Activated CD8-positive, alpha-beta memory T cell treated with anti-CD3 and anti-CD28 coated beads, Interleukin-2, amount 10 ng/mL, durations not matched to agents 7 days and 5 days (primary cell): ENCODE measurements at regions of chr9 and their contacts with region 1.

Region 1: GRCh38 chr9:98989036-98990000 is 45.6 kb downstream of the COL15A1 start:
- DNase-seq: peak; percentile 32
- ATAC-seq: peak; percentile 47
- H3K4me3 Mint-ChIP-seq: no peak overlapping the region
- H3K27ac Mint-ChIP-seq: no peak overlapping the region
- H3K4me1 Mint-ChIP-seq: peaks cover 12% of the 10 kb centered on the region
- H3K27me3 Mint-ChIP-seq: peaks cover under 1% of the 10 kb centered on the region

Region 2: DNA sequence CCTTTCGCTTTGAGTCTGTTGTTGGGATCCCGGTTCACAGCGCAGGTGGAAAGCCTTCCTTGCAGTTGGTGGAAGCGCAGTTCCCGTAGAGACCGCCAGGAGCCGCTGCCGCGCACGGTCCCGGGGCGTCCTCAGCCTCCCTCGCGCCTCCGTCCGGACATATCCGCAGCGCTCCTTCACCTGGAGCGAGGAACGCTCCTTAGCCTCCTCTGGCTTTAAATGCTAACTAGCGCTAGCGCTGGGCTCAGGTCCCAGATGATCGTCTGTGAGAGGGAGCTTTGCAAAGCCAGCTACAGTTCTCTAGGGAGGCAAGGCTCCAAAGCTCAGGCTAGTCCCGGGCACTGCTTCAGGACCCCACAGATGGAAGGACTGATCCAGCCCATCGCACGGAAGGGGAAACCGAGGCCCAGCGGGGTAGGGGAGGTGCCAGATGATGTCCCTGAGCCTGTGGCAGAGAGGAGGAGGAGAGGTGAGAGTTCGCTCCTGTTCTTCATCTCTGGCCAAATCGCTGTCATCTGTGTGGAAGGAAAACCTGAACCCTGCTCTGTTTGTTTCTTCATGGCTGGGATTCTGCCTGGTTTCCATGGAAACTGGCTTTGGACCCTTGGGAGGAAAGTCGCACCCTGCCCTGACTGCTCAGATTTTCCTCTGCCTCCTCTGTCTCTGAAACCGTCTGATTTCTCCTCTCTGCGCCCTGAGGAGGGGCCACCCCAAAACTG is 14.2 kb before region 1 on chr9:
- CTCF ChIA-PET with region 1: interaction called, 30 read pairs
- DNase-seq: peak; percentile 86
- ATAC-seq: peak; percentile 94
- H3K4me3 Mint-ChIP-seq: peak overlapping the region; percentile 25
- H3K27ac Mint-ChIP-seq: no peak overlapping the region
- H3K4me1 Mint-ChIP-seq: peaks cover 11% of the 10 kb centered on the region
- H3K27me3 Mint-ChIP-seq: peaks cover 37% of the 10 kb centered on the region

Region 3: GRCh38 chr9:99040911-99041582 is 51.7 kb after region 1 on chr9:
- CTCF ChIA-PET with region 1: no interaction called
- DNase-seq: no peak
- ATAC-seq: peak; percentile 64
- H3K4me3 Mint-ChIP-seq: no peak overlapping the region
- H3K27ac Mint-ChIP-seq: peak overlapping the region; percentile 70
- H3K4me1 Mint-ChIP-seq: peaks cover 62% of the 10 kb centered on the region
- H3K27me3 Mint-ChIP-seq: no peaks in the 10 kb centered on the region